HAP-1 (cell line): ENCODE measurements at regions of chr1 and their contacts with region 1.

Region 1: GRCh38 chr1:25204797-25205480 is 27.4 kb downstream of the SYF2 start:
- DNase-seq: peak; percentile 31 to 58
- H3K4me3 ChIP-seq: no peak overlapping the region
- H3K4me1 ChIP-seq: no peaks in the 10 kb centered on the region
- H3K27me3 ChIP-seq: no peaks in the 10 kb centered on the region

Region 2: DNA sequence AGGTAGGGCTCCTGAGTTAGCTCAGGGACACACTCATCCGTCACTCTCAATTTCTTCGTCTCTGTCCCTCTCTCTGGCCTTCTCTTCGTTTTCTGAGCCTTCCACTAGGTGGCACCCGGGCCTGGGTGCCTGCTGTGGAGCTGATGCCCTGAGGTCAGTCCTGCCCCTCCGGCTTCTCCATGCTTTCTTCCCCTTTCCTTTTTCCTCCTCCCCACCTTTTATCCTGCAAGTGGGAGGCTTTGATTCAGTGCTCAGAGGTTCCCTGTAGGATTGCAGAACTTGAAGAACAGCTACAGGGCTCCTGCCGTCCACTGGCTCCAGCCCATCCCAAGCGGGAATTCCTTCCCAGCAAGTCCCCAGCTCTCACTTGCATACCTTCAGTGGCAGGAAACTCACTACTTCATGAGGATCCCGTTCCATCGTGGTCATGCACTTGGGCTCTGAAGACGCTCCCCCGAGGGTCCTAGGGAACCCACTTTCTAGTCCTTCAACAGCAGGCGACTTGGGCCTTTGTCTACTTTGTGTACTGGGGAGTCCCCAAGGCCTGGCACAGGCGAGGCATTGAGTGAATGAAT is 516.2 kb before region 1 on chr1:
- in situ Hi-C with region 1: loop called (anchors 25 kb)
- DNase-seq: peak; percentile 76 to 85
- H3K4me3 ChIP-seq: no peak overlapping the region
- H3K4me1 ChIP-seq: no peaks in the 10 kb centered on the region; the same call in 1 of the 2 replicates
- H3K27me3 ChIP-seq: no peaks in the 10 kb centered on the region

Region 3: DNA sequence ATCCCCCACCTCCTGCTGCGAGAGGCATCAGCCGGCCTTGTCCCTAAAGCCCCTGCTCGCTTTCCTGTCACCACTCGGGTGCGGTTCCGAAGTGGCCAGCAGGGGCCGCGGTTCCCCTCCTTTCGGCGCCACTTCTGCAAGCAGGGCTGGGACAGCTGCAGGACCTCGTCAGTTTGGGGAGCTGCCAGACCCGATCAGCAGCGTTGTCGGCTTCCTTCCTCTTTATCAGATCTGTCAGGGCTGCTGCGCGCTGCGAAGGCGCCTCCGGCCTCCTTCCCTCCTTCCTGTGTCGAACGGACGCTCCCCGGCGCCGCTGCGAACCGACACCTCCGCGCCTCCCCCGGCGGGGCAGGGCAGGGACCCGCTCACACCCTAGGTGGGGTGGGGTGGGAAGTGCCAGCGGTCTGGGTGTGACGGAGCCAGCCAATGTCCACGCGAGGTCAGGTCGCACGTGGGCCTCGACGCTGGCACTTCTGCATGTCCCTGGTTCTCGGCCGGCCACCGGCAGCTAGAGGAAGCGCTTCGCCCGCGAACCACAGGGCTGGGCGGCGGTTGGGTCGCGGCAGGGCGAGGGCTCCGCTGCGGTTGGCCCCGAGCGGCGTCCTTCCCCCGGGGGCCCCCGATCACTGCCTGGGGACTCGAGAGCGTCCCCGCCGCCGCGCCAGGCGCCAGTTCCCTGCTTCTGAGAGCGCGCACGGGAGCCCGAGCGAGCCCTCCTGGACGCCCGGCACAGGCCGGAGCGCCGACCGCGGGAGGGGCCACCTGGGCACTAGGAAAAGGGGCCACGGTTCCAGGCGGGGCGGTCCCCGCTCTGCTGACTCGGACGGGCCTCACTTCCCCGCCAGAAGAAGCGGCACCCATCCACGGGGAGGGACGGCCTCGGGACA is 356.7 kb before region 1 on chr1:
- in situ Hi-C with region 1: loop called (anchors 10 kb)
- DNase-seq: peak; percentile 79 to 94
- H3K4me3 ChIP-seq: peak overlapping the region; percentile 39
- H3K4me1 ChIP-seq: peaks cover 13% of the 10 kb centered on the region
- H3K27me3 ChIP-seq: no peaks in the 10 kb centered on the region

Region 4: GRCh38 chr1:24930204-24931145 is 274.5 kb before region 1 on chr1 and contains the start of gene RUNX3:
- in situ Hi-C with region 1: loop called (anchors 10 kb)
- DNase-seq: peak; percentile 76 to 91
- H3K4me3 ChIP-seq: peak within 1 kb of the TSS; percentile 69
- H3K4me1 ChIP-seq: peaks cover 18% of the 10 kb centered on the region
- H3K27me3 ChIP-seq: no peaks in the 10 kb centered on the region

Region 5: GRCh38 chr1:25568090-25568833 is 363.3 kb after region 1 on chr1:
- in situ Hi-C with region 1: no loop called
- DNase-seq: no peak
- H3K4me3 ChIP-seq: no peak overlapping the region
- H3K4me1 ChIP-seq: peaks cover 8% of the 10 kb centered on the region; the same call in 1 of the 2 replicates
- H3K27me3 ChIP-seq: no peaks in the 10 kb centered on the region